ENCODE measurements at regions of chr5 and their contacts with region 1.

Region 1: GRCh38 chr5:148730943-148731861 is 76.9 kb upstream of the HTR4 start:
- DNase-seq: peak; percentile 32 to 60
- ATAC-seq: peak; percentile 64 to 88 (median 81)
- H3K4me3 ChIP-seq: no peak overlapping the region
- H3K27ac ChIP-seq: no peak overlapping the region
- H3K4me1 ChIP-seq: no peaks in the 10 kb centered on the region
- H3K27me3 ChIP-seq: no peaks in the 10 kb centered on the region
- CTCF ChIP-seq: peak; percentile 89

Region 2: DNA sequence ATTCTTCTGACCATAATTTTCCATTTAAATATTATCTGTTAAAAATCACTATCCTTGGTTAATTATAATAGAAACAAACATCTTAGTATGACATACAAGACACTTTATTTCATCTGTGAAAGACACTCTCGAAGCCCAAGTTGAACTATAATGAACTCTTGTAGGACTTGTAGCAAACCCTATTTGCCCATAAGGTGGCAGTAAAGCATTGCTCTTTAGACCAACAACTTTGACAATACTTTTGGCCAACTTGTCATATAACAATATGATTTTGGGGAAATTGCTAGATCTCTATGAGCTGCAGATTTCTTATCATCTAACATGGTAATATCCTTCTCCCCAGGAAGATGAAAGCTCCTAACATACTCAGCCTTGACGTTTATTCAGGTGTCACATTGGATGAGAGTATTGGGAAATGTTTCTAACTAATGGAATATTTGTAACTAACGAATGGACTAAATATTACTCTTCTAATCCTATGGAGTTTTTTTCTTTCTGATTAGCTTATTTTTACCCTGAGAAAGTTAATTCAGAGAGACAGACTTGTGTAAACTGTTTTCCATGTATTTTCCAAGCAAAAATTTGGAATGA is 551.9 kb before region 1 on chr5:
- intact Hi-C with region 1: loop called (anchors 5 to 10 kb)
- DNase-seq: no peak
- ATAC-seq: peak in 2 of 4 donors; percentile 53 to 74
- H3K4me3 ChIP-seq: no peak overlapping the region
- H3K27ac ChIP-seq: no peak overlapping the region
- H3K4me1 ChIP-seq: no peaks in the 10 kb centered on the region
- H3K27me3 ChIP-seq: no peaks in the 10 kb centered on the region
- CTCF ChIP-seq: peak; percentile 55

Region 3: GRCh38 chr5:148443998-148444397 is 287.2 kb before region 1 on chr5:
- intact Hi-C with region 1: loop called (anchors 2 kb)
- DNase-seq: no peak
- ATAC-seq: peak; percentile 74 to 96 (median 86)
- H3K4me3 ChIP-seq: no peak overlapping the region
- H3K27ac ChIP-seq: no peak overlapping the region
- H3K4me1 ChIP-seq: peaks cover 4% of the 10 kb centered on the region
- H3K27me3 ChIP-seq: no peaks in the 10 kb centered on the region
- CTCF ChIP-seq: peak; percentile 80

Region 4: GRCh38 chr5:148998174-148998797 is 267.1 kb after region 1 on chr5:
- intact Hi-C with region 1: loop called (anchors 5 to 10 kb)
- DNase-seq: no peak
- ATAC-seq: peak; percentile 57 to 76 (median 65)
- H3K4me3 ChIP-seq: no peak overlapping the region
- H3K27ac ChIP-seq: no peak overlapping the region
- H3K4me1 ChIP-seq: peaks cover 45% of the 10 kb centered on the region
- H3K27me3 ChIP-seq: no peaks in the 10 kb centered on the region
- CTCF ChIP-seq: peak; percentile 75

Region 5: GRCh38 chr5:149114403-149115312 is 383.5 kb after region 1 on chr5:
- intact Hi-C with region 1: loop called (anchors 2 kb)
- DNase-seq: peak in 1 of 2 donors; percentile 57
- ATAC-seq: peak; percentile 88 to 98 (median 94)
- H3K4me3 ChIP-seq: no peak overlapping the region
- H3K27ac ChIP-seq: no peak overlapping the region
- H3K4me1 ChIP-seq: no peaks in the 10 kb centered on the region
- H3K27me3 ChIP-seq: no peaks in the 10 kb centered on the region
- CTCF ChIP-seq: peak; percentile 79

Region 6: GRCh38 chr5:149238583-149238982 is 507.4 kb after region 1 on chr5:
- intact Hi-C with region 1: loop called in 1 of 2 experiments (anchors 10 kb)
- DNase-seq: no peak
- ATAC-seq: no peak
- H3K4me3 ChIP-seq: no peak overlapping the region
- H3K27ac ChIP-seq: no peak overlapping the region
- H3K4me1 ChIP-seq: no peaks in the 10 kb centered on the region
- H3K27me3 ChIP-seq: no peaks in the 10 kb centered on the region
- CTCF ChIP-seq: no peak